MCF 10A (cell line): ENCODE measurements at regions of chr10 and their contacts with region 1.

Region 1: DNA sequence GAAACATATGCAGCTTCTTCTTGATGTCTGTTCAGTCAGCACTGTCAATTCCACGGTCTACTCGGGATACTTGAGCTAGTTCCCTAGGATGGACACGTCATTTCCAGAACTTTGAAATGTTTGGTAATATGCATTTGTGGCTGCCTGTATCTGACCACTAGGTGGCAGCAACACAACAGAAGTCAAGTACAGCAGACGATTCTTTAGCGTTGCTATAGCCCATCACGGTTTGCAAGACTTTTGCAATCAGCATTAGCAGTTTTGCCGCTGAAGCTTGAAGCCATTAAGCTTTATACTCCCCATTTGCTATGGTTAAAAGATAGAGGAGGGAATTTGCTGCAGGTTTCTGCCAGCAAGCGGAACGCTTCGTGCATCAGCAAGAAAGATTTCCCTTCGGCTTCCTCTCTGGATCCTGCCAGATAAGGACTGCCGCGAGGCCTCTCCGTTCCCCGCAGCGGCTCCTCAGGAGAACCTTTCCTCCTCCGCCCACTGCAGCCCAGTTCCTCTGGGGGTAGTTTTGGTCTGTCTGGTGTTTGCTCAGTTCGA is 63.5 kb downstream of the ABCC2 start:
- DNase-seq: peak; percentile 88
- H3K4me3 Mint-ChIP-seq: no peak overlapping the region
- H3K27ac Mint-ChIP-seq: no peak overlapping the region
- H3K4me1 Mint-ChIP-seq: no peaks in the 10 kb centered on the region
- H3K27me3 Mint-ChIP-seq: no peaks in the 10 kb centered on the region
- CTCF ChIP-seq: peak; percentile 82

Region 2: DNA sequence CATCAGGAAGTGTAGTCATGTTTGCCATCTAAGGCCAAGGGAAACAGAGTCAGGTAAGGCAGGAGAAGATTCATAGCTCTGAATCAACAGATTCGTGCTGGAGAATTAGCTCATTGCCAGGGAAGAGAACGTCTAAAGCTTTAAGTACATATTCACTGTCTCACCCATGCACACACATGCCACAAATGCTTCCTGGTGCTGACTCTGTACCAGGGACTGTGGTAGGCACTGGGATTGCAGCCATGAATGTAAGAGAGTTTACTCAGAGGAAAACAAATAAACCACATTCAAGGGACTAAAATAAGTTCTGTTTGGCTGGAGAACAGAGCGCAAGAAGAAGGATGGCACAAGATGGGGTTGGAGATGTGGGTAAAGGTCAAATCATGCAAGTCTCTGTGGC is 1309.4 kb before region 1 on chr10:
- CTCF ChIA-PET with region 1: no interaction called
- POLR2A ChIA-PET with region 1: no interaction called
- intact Hi-C with region 1: no loop called
- DNase-seq: peak; percentile 25
- H3K4me3 Mint-ChIP-seq: no peak overlapping the region
- H3K27ac Mint-ChIP-seq: no peak overlapping the region
- H3K4me1 Mint-ChIP-seq: no peaks in the 10 kb centered on the region
- H3K27me3 Mint-ChIP-seq: no peaks in the 10 kb centered on the region
- CTCF ChIP-seq: no peak

Region 3: GRCh38 chr10:99732033-99732912 is 113.6 kb before region 1 on chr10 and contains the starts of genes COX15 and CUTC:
- CTCF ChIA-PET with region 1: interaction called, 5 read pairs
- POLR2A ChIA-PET with region 1: no interaction called
- intact Hi-C with region 1: loop called (anchors 5 kb)
- DNase-seq: peak; percentile 95
- H3K4me3 Mint-ChIP-seq: peak within 1 kb of the TSS; percentile 88
- H3K27ac Mint-ChIP-seq: peak within 1 kb of the TSS; percentile 93
- H3K4me1 Mint-ChIP-seq: peaks cover 29% of the 10 kb centered on the region
- H3K27me3 Mint-ChIP-seq: no peaks in the 10 kb centered on the region
- CTCF ChIP-seq: peak; percentile 42
- total RNA-seq, gene COX15: 50.7 and 55.3 TPM in 2 replicates
- total RNA-seq, gene CUTC: 11.9 and 15.0 TPM in 2 replicates

Region 4: DNA sequence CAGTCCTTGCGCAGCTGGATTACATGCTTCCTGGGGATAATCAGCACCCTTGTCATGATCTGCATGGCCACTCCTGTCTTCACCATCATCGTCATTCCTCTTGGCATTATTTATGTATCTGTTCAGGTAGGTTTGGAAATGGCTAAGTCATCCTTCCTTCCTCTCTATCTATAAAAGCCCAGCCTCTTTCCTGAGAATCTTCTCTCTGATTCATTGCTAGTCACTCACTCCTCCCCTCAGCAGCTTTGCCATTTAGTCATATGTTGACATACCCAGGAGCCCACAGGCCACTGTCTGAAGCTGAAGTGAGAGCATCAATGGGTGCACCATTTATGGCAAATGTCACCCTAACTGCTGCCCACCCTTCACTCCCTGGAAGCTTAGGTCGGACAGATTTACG is 11.5 kb before region 1 on chr10:
- CTCF ChIA-PET with region 1: interaction called, 14 read pairs
- POLR2A ChIA-PET with region 1: interaction called, 4 read pairs
- intact Hi-C with region 1: no loop called
- DNase-seq: peak; percentile 60
- H3K4me3 Mint-ChIP-seq: no peak overlapping the region
- H3K27ac Mint-ChIP-seq: no peak overlapping the region
- H3K4me1 Mint-ChIP-seq: peaks cover 7% of the 10 kb centered on the region
- H3K27me3 Mint-ChIP-seq: no peaks in the 10 kb centered on the region
- CTCF ChIP-seq: no peak

Region 5: DNA sequence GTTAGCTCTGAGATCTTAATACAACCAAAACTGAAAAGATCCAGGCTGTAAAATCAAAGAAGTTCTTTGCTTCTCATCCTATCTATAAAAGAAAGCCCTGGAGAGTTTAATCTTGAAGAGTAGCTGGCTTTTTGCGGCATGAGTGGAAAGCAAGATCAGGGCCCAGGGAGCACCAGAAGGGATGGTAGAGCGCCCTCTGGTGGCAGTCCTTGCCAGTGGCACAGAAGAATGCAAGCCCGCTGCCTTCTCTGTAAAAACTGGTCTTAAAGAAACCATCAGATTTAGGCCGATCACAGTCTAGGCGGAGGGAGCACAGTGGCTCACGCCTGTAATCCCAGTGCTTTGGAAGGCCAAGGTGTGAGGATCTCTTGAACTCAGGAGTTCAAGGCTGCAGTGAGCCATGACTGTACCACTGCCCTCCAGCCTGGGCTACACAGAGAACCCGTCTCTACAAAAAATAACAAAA is 200.1 kb after region 1 on chr10:
- CTCF ChIA-PET with region 1: interaction called, 175 read pairs
- POLR2A ChIA-PET with region 1: interaction called, 13 read pairs
- intact Hi-C with region 1: loop called (anchors 1 kb)
- DNase-seq: peak; percentile 82
- H3K4me3 Mint-ChIP-seq: no peak overlapping the region
- H3K27ac Mint-ChIP-seq: no peak overlapping the region
- H3K4me1 Mint-ChIP-seq: peaks cover 19% of the 10 kb centered on the region
- H3K27me3 Mint-ChIP-seq: no peaks in the 10 kb centered on the region
- CTCF ChIP-seq: peak; percentile 90

Region 6: DNA sequence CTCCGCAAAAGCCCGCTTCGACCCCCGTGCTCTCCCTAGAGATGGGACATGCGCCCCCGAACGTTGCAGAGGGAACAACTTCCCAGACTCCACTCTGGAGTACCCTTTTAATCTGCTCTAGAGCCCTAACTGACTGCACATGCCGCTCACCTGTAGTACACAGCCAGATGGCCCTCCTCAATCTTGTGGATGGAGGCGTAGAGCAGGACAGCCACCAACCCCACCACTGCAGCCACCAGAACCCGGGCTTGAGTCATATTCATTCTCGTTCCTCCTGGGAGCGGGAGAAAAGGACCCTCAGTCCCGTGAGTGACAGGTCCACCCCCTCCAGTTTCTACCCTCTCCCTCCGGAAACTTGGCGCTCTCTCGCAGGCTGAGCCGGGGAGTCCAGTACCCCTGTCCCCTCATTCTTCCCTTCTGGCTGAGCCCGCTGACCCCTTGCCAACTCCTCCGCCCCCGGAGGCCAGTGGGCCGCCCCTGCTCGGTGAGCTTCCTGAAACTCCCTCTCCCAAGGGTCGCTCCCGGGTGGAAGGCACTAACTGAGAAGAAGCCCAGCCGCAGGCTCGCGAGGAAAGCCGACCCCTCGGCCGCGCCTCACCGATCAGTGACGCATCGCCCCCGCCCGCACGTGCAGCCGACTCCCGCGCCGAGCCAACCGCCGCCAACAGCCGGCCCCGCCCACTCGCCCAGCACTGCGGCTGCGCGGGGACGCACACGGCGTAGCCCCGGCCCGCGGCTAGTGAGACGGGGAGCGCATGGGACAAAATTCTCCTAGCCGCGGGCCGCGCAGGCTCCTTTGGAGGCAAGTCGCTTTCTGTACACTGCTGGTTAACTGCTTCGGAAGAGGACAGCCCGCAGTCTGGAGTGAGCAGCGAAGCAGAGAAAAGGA is 339.7 kb after region 1 on chr10 and contains the start of gene ERLIN1:
- CTCF ChIA-PET with region 1: interaction called, 5 read pairs
- POLR2A ChIA-PET with region 1: interaction called, 7 read pairs
- intact Hi-C with region 1: loop called (anchors 5 kb)
- DNase-seq: peak; percentile 94
- H3K4me3 Mint-ChIP-seq: peak within 1 kb of the TSS; percentile 94
- H3K27ac Mint-ChIP-seq: peak within 1 kb of the TSS; percentile 90
- H3K4me1 Mint-ChIP-seq: peaks cover 31% of the 10 kb centered on the region
- H3K27me3 Mint-ChIP-seq: no peaks in the 10 kb centered on the region
- CTCF ChIP-seq: no peak
- total RNA-seq, gene ERLIN1: 38.0 and 42.9 TPM in 2 replicates

Region 7: DNA sequence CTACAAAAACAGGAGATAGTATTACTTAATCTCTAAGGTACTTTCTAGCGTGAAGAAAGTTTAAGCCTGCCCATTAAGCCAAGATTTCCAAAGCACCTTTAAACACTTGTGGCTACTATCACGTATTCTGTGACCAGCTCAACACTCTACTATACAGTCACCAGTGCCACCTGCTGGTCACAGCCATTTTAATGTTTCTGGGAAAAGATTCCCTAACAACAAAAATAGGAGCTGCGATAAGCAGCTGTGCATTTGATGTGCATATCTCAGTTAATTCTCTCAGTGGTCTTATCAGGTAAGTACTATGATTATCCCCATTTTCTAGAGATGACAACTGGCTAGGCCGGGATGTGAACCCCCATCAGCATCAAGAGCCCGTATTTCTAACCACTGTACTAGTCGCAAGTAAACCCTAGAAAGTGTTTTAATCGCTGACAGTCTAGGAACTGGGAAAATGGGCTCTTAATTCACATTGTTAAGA is 672.9 kb after region 1 on chr10:
- CTCF ChIA-PET with region 1: no interaction called
- POLR2A ChIA-PET with region 1: no interaction called
- intact Hi-C with region 1: loop called (anchors 10 kb)
- DNase-seq: peak; percentile 72
- H3K4me3 Mint-ChIP-seq: no peak overlapping the region
- H3K27ac Mint-ChIP-seq: no peak overlapping the region
- H3K4me1 Mint-ChIP-seq: no peaks in the 10 kb centered on the region
- H3K27me3 Mint-ChIP-seq: no peaks in the 10 kb centered on the region
- CTCF ChIP-seq: peak; percentile 63